Ascending aorta (tissue), 2 donors: ENCODE measurements at regions of chr7 and their contacts with region 1.

Region 1: GRCh38 chr7:39566023-39566921 is at the start of gene YAE1:
- DNase-seq: peak; percentile 25 to 88
- H3K4me3 ChIP-seq: peak within 1 kb of the TSS; percentile 74 to 87
- H3K27ac ChIP-seq: peak within 1 kb of the TSS; percentile 62 to 72
- H3K4me1 ChIP-seq: peaks cover 0 to 4% of the 10 kb centered on the region in 2 donors
- H3K27me3 ChIP-seq: no peaks in the 10 kb centered on the region
- CTCF ChIP-seq: no peak
- total RNA-seq, gene YAE1: 3.3 TPM

Region 2: GRCh38 chr7:39732837-39733804 is 166.8 kb after region 1 on chr7:
- intact Hi-C with region 1: loop called (anchors 5 kb)
- DNase-seq: peak; percentile 75 to 97
- H3K4me3 ChIP-seq: peak overlapping the region; percentile 66 to 76
- H3K27ac ChIP-seq: peak overlapping the region; percentile 78 to 81
- H3K4me1 ChIP-seq: peaks cover 0 to 9% of the 10 kb centered on the region in 2 donors
- H3K27me3 ChIP-seq: no peaks in the 10 kb centered on the region
- CTCF ChIP-seq: no peak